GM12878 (cell line): ENCODE measurements at regions of chr7 and their contacts with region 1.

Region 1: GRCh38 chr7:139374246-139374645 is 14.6 kb downstream of the LUC7L2 start:
- DNase-seq: no peak
- ATAC-seq: no peak
- H3K4me3 ChIP-seq: no peak overlapping the region
- H3K27ac ChIP-seq: no peak overlapping the region
- H3K4me1 ChIP-seq: no peaks in the 10 kb centered on the region
- H3K27me3 ChIP-seq: no peaks in the 10 kb centered on the region
- CTCF ChIP-seq: no peak
- EP300 ChIP-seq: no peak
- POLR2A ChIP-seq: no peak
- RAD21 ChIP-seq: no peak

Region 2: GRCh38 chr7:139396323-139396951 is 22.2 kb after region 1 on chr7:
- CTCF ChIA-PET with region 1: interaction called, 3 read pairs
- POLR2A ChIA-PET with region 1: interaction called, 4 read pairs
- RAD21 ChIA-PET with region 1: interaction called, 6 read pairs
- SMC1A ChIA-PET with region 1: interaction called, 10 read pairs
- in situ Hi-C with region 1: no loop called
- intact Hi-C with region 1: no loop called
- DNase-seq: no peak
- ATAC-seq: no peak
- H3K4me3 ChIP-seq: no peak overlapping the region
- H3K27ac ChIP-seq: no peak overlapping the region
- H3K4me1 ChIP-seq: no peaks in the 10 kb centered on the region
- H3K27me3 ChIP-seq: no peaks in the 10 kb centered on the region
- CTCF ChIP-seq: no peak
- EP300 ChIP-seq: no peak
- POLR2A ChIP-seq: no peak
- RAD21 ChIP-seq: no peak